Colonic mucosa (tissue), 4 donors: ENCODE measurements at regions of chr1 and their contacts with region 1.

Region 1: GRCh38 chr1:92749024-92749634 is 35.8 kb downstream of the EVI5 start:
- DNase-seq: peak; percentile 63
- H3K4me3 ChIP-seq: no peak overlapping the region
- H3K27ac ChIP-seq: no peak overlapping the region
- H3K4me1 ChIP-seq: no peaks in the 10 kb centered on the region
- H3K27me3 ChIP-seq: no peaks in the 10 kb centered on the region
- CTCF ChIP-seq: peak; percentile 59

Region 2: DNA sequence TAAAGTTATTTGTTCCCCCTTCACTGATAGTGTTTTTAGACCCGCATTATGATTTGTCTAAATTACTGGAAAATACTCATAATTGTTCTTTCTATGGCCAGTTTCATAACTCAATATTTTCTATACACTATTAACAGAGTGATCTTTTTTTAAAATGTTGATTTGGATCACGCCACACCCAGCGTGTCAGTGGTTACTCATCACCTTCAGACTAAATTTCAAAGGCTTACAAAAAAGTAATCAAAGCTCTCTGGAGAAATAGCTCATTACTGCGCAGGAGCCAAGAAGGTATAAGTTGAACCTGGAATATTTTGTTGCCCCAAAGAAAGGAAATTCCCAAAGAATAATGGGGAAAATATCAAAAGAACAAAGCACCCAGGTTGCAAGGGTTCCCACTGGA is 69.1 kb before region 1 on chr1:
- intact Hi-C with region 1: no loop called
- DNase-seq: no peak
- H3K4me3 ChIP-seq: no peak overlapping the region
- H3K27ac ChIP-seq: no peak overlapping the region
- H3K4me1 ChIP-seq: no peaks in the 10 kb centered on the region
- H3K27me3 ChIP-seq: no peaks in the 10 kb centered on the region
- CTCF ChIP-seq: no peak

Region 3: DNA sequence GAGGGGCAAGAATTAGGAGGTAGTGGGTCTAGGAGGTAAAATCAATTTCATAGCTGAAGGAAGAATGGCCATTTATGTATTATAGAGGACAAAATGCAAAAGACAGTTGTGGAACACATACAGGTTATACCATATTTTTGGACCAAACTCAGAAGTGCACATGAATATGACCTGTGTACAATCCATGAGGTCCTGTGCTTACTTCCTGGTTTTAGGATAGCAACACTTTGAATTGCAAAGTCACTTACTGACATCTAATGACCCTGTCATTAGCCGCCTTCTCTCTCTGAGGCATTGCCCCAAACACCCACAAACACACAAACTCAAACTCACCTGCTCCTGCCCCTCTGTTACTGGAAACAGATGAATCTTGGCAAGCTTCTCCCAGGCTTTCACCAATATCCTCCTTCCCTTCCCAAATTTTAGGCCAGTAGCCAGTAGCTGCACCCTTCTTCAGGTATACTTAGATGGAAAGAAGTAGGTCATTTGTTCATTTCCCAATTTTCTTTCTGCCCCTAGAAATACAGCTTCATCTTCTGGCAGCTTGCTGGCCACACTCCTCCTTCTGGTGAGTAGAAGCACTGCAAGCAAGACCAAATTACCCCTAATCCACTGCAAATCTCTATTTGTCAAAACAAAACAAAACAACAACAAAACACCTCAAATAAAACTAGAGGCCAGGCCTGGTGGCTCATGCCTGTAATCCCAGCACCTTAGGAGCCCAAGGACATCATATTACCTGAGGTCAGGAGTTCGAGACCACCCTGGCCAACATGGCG is 69.0 kb after region 1 on chr1:
- intact Hi-C with region 1: loop called (anchors 2 kb)
- DNase-seq: peak; percentile 28
- H3K4me3 ChIP-seq: no peak overlapping the region
- H3K27ac ChIP-seq: peak overlapping the region; percentile 63
- H3K4me1 ChIP-seq: no peaks in the 10 kb centered on the region
- H3K27me3 ChIP-seq: no peaks in the 10 kb centered on the region
- CTCF ChIP-seq: peak; percentile 59

Region 4: GRCh38 chr1:92843429-92844352 is 94.6 kb after region 1 on chr1:
- intact Hi-C with region 1: no loop called
- DNase-seq: no peak
- H3K4me3 ChIP-seq: no peak overlapping the region
- H3K27ac ChIP-seq: no peak overlapping the region
- H3K4me1 ChIP-seq: no peaks in the 10 kb centered on the region
- H3K27me3 ChIP-seq: no peaks in the 10 kb centered on the region
- CTCF ChIP-seq: no peak